Heart right ventricle (tissue), 16 donors: ENCODE measurements at regions of chr9 and their contacts with region 1.

Region 1: GRCh38 chr9:109520478-109521132 is 22.5 kb upstream of the PTPN3 start:
- DNase-seq: peak in 1 of 2 donors; percentile 65
- ATAC-seq: peak; percentile 73 to 93 (median 86)
- H3K4me3 ChIP-seq: no peak overlapping the region
- H3K27ac ChIP-seq: no peak overlapping the region
- H3K4me1 ChIP-seq: no peaks in the 10 kb centered on the region
- H3K27me3 ChIP-seq: peaks cover 0 to 5% (median 0%) of the 10 kb centered on the region in 7 donors
- CTCF ChIP-seq: peak; percentile 73 to 91 (median 83)

Region 2: GRCh38 chr9:109297899-109298298 is 222.7 kb before region 1 on chr9:
- intact Hi-C with region 1: no loop called
- DNase-seq: no peak
- ATAC-seq: no peak
- H3K4me3 ChIP-seq: no peak overlapping the region
- H3K27ac ChIP-seq: no peak overlapping the region
- H3K4me1 ChIP-seq: no peaks in the 10 kb centered on the region
- H3K27me3 ChIP-seq: peaks cover 0 to 3% (median 0%) of the 10 kb centered on the region in 7 donors
- CTCF ChIP-seq: no peak

Region 3: GRCh38 chr9:109440797-109441287 is 79.8 kb before region 1 on chr9:
- intact Hi-C with region 1: loop called in 8 of 10 experiments (anchors 1 to 10 kb)
- DNase-seq: peak in 1 of 2 donors; percentile 65
- ATAC-seq: peak; percentile 59 to 82 (median 72)
- H3K4me3 ChIP-seq: no peak overlapping the region
- H3K27ac ChIP-seq: no peak overlapping the region
- H3K4me1 ChIP-seq: peaks cover 0 to 34% (median 12%) of the 10 kb centered on the region in 9 donors
- H3K27me3 ChIP-seq: peaks cover 0 to 21% (median 0%) of the 10 kb centered on the region in 7 donors
- CTCF ChIP-seq: peak; percentile 55 to 79 (median 74)

Region 4: GRCh38 chr9:109469646-109470358 is 50.8 kb before region 1 on chr9:
- intact Hi-C with region 1: loop called in 1 of 10 experiments (anchors 5 kb)
- DNase-seq: peak; percentile 48 to 66
- ATAC-seq: peak; percentile 74 to 87 (median 84)
- H3K4me3 ChIP-seq: no peak overlapping the region
- H3K27ac ChIP-seq: peak overlapping the region in 3 of 10 donors; percentile 23 to 37 (median 24)
- H3K4me1 ChIP-seq: peaks cover 0 to 43% (median 17%) of the 10 kb centered on the region in 9 donors
- H3K27me3 ChIP-seq: peaks cover 0 to 52% (median 0%) of the 10 kb centered on the region in 7 donors
- CTCF ChIP-seq: peak; percentile 69 to 94 (median 90)